Thyroid gland (tissue), 4 donors: ENCODE measurements at regions of chr16 and their contacts with region 1.

Region 1: GRCh38 chr16:27374804-27375425 is 27.1 kb upstream of the IL21R start:
- DNase-seq: peak; percentile 59 to 62
- H3K4me3 ChIP-seq: no peak overlapping the region
- H3K27ac ChIP-seq: peak overlapping the region in 1 of 3 donors; percentile 22
- H3K4me1 ChIP-seq: peaks cover 0 to 6% of the 10 kb centered on the region in 2 donors
- H3K27me3 ChIP-seq: no peaks in the 10 kb centered on the region
- CTCF ChIP-seq: peak in 4 of 6 experiments; percentile 28 to 54 (median 47)
- POLR2A ChIP-seq: no peak

Region 2: GRCh38 chr16:27430923-27431484 is 56.1 kb after region 1 on chr16:
- intact Hi-C with region 1: no loop called
- DNase-seq: no peak
- H3K4me3 ChIP-seq: no peak overlapping the region
- H3K27ac ChIP-seq: no peak overlapping the region
- H3K4me1 ChIP-seq: no peaks in the 10 kb centered on the region
- H3K27me3 ChIP-seq: no peaks in the 10 kb centered on the region
- CTCF ChIP-seq: no peak
- POLR2A ChIP-seq: no peak

Region 3: GRCh38 chr16:27449434-27450195 is 74.7 kb after region 1 on chr16:
- intact Hi-C with region 1: loop called (anchors 5 kb)
- DNase-seq: no peak
- H3K4me3 ChIP-seq: no peak overlapping the region
- H3K27ac ChIP-seq: no peak overlapping the region
- H3K4me1 ChIP-seq: peaks cover 9 to 15% of the 10 kb centered on the region in 2 donors
- H3K27me3 ChIP-seq: no peaks in the 10 kb centered on the region
- CTCF ChIP-seq: no peak
- POLR2A ChIP-seq: no peak